CD8-positive, alpha-beta T cell (primary cell): ENCODE measurements at regions of chr1 and their contacts with region 1.

Region 1: GRCh38 chr1:101920577-101920976 is 76.1 kb downstream of the OLFM3 start:
- DNase-seq: no peak
- ATAC-seq: no peak
- H3K4me3 ChIP-seq: no peak overlapping the region
- H3K4me3 Mint-ChIP-seq: no peak overlapping the region
- H3K27ac ChIP-seq: no peak overlapping the region
- H3K27ac Mint-ChIP-seq: no peak overlapping the region
- H3K4me1 ChIP-seq: no peaks in the 10 kb centered on the region
- H3K4me1 Mint-ChIP-seq: no peaks in the 10 kb centered on the region
- H3K27me3 ChIP-seq: no peaks in the 10 kb centered on the region
- H3K27me3 Mint-ChIP-seq: no peaks in the 10 kb centered on the region
- CTCF ChIP-seq: no peak

Region 2: GRCh38 chr1:101738475-101738874 is 182.1 kb before region 1 on chr1:
- CTCF ChIA-PET with region 1: no interaction called
- POLR2A ChIA-PET with region 1: no interaction called
- intact Hi-C with region 1: no loop called
- DNase-seq: no peak
- ATAC-seq: no peak
- H3K4me3 ChIP-seq: no peak overlapping the region
- H3K4me3 Mint-ChIP-seq: no peak overlapping the region
- H3K27ac ChIP-seq: no peak overlapping the region
- H3K27ac Mint-ChIP-seq: no peak overlapping the region
- H3K4me1 ChIP-seq: no peaks in the 10 kb centered on the region
- H3K4me1 Mint-ChIP-seq: no peaks in the 10 kb centered on the region
- H3K27me3 ChIP-seq: no peaks in the 10 kb centered on the region
- H3K27me3 Mint-ChIP-seq: peaks cover 2% of the 10 kb centered on the region
- CTCF ChIP-seq: no peak

Region 3: DNA sequence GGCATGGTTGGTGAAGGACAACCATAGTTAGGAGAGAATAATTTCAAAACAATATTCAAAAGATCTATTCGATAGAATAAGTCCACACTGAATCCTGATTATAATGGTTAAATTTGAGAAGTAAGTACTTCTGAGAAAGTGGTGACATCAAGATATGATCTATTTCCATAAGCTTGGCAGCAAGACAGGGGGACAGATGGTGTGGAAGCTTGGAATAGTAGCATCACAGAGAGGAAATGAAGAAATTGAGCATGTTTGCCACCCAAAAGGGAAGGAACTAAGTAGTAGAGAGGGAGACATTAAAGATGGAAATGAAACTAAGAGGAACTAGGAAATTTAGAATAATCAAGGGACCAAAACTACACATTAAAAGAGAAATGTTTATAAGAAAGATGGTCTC is 18.4 kb before region 1 on chr1:
- CTCF ChIA-PET with region 1: no interaction called
- POLR2A ChIA-PET with region 1: no interaction called
- intact Hi-C with region 1: loop called in 1 of 2 experiments (anchors 2 kb)
- DNase-seq: no peak
- ATAC-seq: no peak
- H3K4me3 ChIP-seq: no peak overlapping the region
- H3K4me3 Mint-ChIP-seq: no peak overlapping the region
- H3K27ac ChIP-seq: no peak overlapping the region
- H3K27ac Mint-ChIP-seq: no peak overlapping the region
- H3K4me1 ChIP-seq: no peaks in the 10 kb centered on the region
- H3K4me1 Mint-ChIP-seq: no peaks in the 10 kb centered on the region
- H3K27me3 ChIP-seq: peaks cover 0 to 4% of the 10 kb centered on the region in 2 experiments
- H3K27me3 Mint-ChIP-seq: no peaks in the 10 kb centered on the region
- CTCF ChIP-seq: no peak